HCT116 (cell line): ENCODE measurements at regions of chr5 and their contacts with region 1.

Region 1: GRCh38 chr5:68252673-68253623 is 37.4 kb downstream of the PIK3R1 start:
- DNase-seq: peak; percentile 46
- ATAC-seq: peak; percentile 94
- H3K4me3 ChIP-seq: no peak overlapping the region
- H3K27ac ChIP-seq: no peak overlapping the region
- H3K4me1 ChIP-seq: no peaks in the 10 kb centered on the region
- H3K27me3 ChIP-seq: no peaks in the 10 kb centered on the region
- CTCF ChIP-seq: peak; percentile 56 to 85 (median 84); a peak in 5 of 6 replicates
- POLR2A ChIP-seq: no peak
- RAD21 ChIP-seq: peak; percentile 90

Region 2: GRCh38 chr5:67156976-67157583 is 1095.9 kb before region 1 on chr5:
- CTCF ChIA-PET with region 1: interaction called, 5 read pairs
- POLR2A ChIA-PET with region 1: no interaction called
- RAD21 ChIA-PET with region 1: no interaction called
- intact Hi-C with region 1: loop called (anchors 2 kb)
- DNase-seq: peak; percentile 29
- ATAC-seq: peak; percentile 89
- H3K4me3 ChIP-seq: no peak overlapping the region
- H3K27ac ChIP-seq: no peak overlapping the region
- H3K4me1 ChIP-seq: peaks cover 4 to 7% of the 10 kb centered on the region in 2 experiments
- H3K27me3 ChIP-seq: peaks cover 16% of the 10 kb centered on the region; the same call in 1 of the 2 replicates
- CTCF ChIP-seq: peak; percentile 59 to 88 (median 83); a peak in 5 of 6 replicates
- POLR2A ChIP-seq: no peak
- RAD21 ChIP-seq: peak; percentile 68

Region 3: GRCh38 chr5:67493676-67494075 is 759.3 kb before region 1 on chr5:
- CTCF ChIA-PET with region 1: interaction called, 4 read pairs
- POLR2A ChIA-PET with region 1: no interaction called
- RAD21 ChIA-PET with region 1: no interaction called
- intact Hi-C with region 1: loop called (anchors 1 kb)
- DNase-seq: peak; percentile 3
- ATAC-seq: peak; percentile 78
- H3K4me3 ChIP-seq: no peak overlapping the region
- H3K27ac ChIP-seq: no peak overlapping the region
- H3K4me1 ChIP-seq: no peaks in the 10 kb centered on the region
- H3K27me3 ChIP-seq: no peaks in the 10 kb centered on the region
- CTCF ChIP-seq: peak; percentile 20 to 28 (median 27); a peak in 4 of 6 replicates
- POLR2A ChIP-seq: no peak
- RAD21 ChIP-seq: peak; percentile 52

Region 4: GRCh38 chr5:68196876-68197275 is 56.1 kb before region 1 on chr5:
- CTCF ChIA-PET with region 1: no interaction called
- POLR2A ChIA-PET with region 1: no interaction called
- RAD21 ChIA-PET with region 1: no interaction called
- intact Hi-C with region 1: no loop called
- DNase-seq: no peak
- ATAC-seq: no peak
- H3K4me3 ChIP-seq: no peak overlapping the region
- H3K27ac ChIP-seq: no peak overlapping the region
- H3K4me1 ChIP-seq: peaks cover 0 to 6% of the 10 kb centered on the region in 2 experiments; a peak in 2 of 4 replicates
- H3K27me3 ChIP-seq: no peaks in the 10 kb centered on the region
- CTCF ChIP-seq: no peak
- POLR2A ChIP-seq: no peak
- RAD21 ChIP-seq: no peak